ENCODE measurements at regions of chr16 and their contacts with region 1.

Region 1: DNA sequence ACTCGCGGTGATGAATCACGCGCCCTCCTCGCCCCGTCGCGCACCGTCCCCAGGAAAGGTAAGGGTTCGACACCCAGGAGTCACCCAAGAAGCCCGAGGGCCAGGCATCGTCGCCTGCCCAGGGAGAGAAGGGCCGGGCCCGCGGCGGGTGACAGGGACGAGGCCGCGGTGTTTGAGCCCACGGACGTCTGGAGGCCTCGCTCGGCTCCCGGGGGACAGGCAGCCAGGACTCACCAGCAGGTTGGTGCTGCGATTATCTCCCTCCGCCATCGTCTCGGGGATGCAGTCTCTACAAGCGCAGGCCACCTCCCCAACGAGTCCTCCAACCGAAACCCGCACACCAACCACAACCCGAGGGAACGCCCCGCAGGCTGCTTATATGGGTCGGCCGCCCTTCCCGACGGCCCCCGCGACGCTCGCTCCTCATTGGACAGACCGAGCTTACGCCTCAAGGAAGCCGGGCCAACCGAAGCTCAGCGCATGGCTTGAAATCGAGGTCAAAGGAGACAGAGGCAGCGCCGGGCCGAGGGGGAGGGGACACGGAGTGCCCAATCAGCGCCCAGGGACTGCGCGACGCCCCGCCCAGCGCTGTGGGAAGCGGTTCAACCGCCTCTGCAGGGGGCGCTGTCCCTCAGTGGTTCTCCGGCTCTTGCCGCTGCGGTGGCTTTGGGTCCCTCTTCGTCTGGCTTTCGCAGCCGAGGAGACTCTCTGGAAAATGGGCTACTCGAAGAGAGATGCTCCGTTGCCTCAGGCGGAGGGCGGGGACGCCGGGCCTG is at the start of gene ARL6IP1:
- DNase-seq: peak; percentile 97 to 100 (median 99)
- H3K4me3 ChIP-seq: peak within 1 kb of the TSS; percentile 82
- H3K4me3 Mint-ChIP-seq: peak within 1 kb of the TSS; percentile 88 to 98 (median 95)
- H3K27ac ChIP-seq: peak within 1 kb of the TSS; percentile 92
- H3K27ac Mint-ChIP-seq: peak within 1 kb of the TSS; percentile 87 to 99 (median 96)
- H3K4me1 ChIP-seq: peaks cover 45% of the 10 kb centered on the region
- H3K4me1 Mint-ChIP-seq: peaks cover 43 to 77% (median 62%) of the 10 kb centered on the region in 3 donors
- H3K27me3 ChIP-seq: no peaks in the 10 kb centered on the region
- H3K27me3 Mint-ChIP-seq: peaks cover 0 to 2% of the 10 kb centered on the region in 2 donors
- total RNA-seq, gene ARL6IP1: 90.6 to 92.8 TPM

Region 2: GRCh38 chr16:18789850-18790724 is 11.3 kb before region 1 on chr16 and contains the start of gene RPS15A:
- CTCF ChIA-PET with region 1: interaction called, 37 read pairs
- POLR2A ChIA-PET with region 1: interaction called, 118 read pairs
- DNase-seq: peak; percentile 86 to 96 (median 92)
- H3K4me3 ChIP-seq: peak within 1 kb of the TSS; percentile 76
- H3K4me3 Mint-ChIP-seq: peak within 1 kb of the TSS; percentile 90 to 99 (median 97)
- H3K27ac ChIP-seq: peak within 1 kb of the TSS; percentile 85
- H3K27ac Mint-ChIP-seq: peak within 1 kb of the TSS; percentile 87 to 98 (median 92)
- H3K4me1 ChIP-seq: peaks cover 41% of the 10 kb centered on the region
- H3K4me1 Mint-ChIP-seq: peaks cover 46 to 55% (median 52%) of the 10 kb centered on the region in 3 donors
- H3K27me3 ChIP-seq: no peaks in the 10 kb centered on the region
- H3K27me3 Mint-ChIP-seq: peaks cover 0 to 2% of the 10 kb centered on the region in 2 donors
- total RNA-seq, gene RPS15A: 1,654 to 1,749 TPM

Region 3: GRCh38 chr16:18816286-18816685 is 14.9 kb after region 1 on chr16:
- CTCF ChIA-PET with region 1: interaction called, 37 read pairs
- POLR2A ChIA-PET with region 1: interaction called, 5 read pairs
- DNase-seq: no peak
- H3K4me3 ChIP-seq: no peak overlapping the region
- H3K4me3 Mint-ChIP-seq: no peak overlapping the region
- H3K27ac ChIP-seq: no peak overlapping the region
- H3K27ac Mint-ChIP-seq: peak overlapping the region in 1 of 8 donors; percentile 30
- H3K4me1 ChIP-seq: peaks cover 4% of the 10 kb centered on the region
- H3K4me1 Mint-ChIP-seq: peaks cover 12 to 16% (median 12%) of the 10 kb centered on the region in 3 donors
- H3K27me3 ChIP-seq: no peaks in the 10 kb centered on the region
- H3K27me3 Mint-ChIP-seq: no peaks in the 10 kb centered on the region

Region 4: DNA sequence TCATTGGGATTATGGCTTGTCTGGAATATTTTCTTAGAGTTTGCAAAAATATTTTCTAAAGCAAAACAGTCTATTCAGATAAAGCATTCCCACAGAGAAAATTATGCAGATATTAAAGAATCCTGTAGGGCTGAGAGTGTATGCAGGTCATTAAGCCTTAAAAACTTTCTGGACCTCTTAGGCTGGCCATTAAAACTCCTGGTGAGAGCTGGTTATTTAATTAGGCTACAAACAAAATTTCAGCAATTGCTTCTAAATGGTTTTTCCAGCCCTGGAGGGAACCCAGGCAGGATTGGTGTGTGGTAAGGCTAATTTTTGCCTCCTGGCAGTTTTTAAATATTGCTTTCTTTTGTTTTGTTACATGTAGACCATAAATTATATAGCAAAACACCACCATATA is 152.2 kb after region 1 on chr16:
- CTCF ChIA-PET with region 1: no interaction called
- POLR2A ChIA-PET with region 1: no interaction called
- DNase-seq: no peak
- H3K4me3 ChIP-seq: no peak overlapping the region
- H3K4me3 Mint-ChIP-seq: no peak overlapping the region
- H3K27ac ChIP-seq: no peak overlapping the region
- H3K27ac Mint-ChIP-seq: no peak overlapping the region
- H3K4me1 ChIP-seq: peaks cover 10% of the 10 kb centered on the region
- H3K4me1 Mint-ChIP-seq: peaks cover 6 to 12% (median 6%) of the 10 kb centered on the region in 3 donors
- H3K27me3 ChIP-seq: peaks cover 3% of the 10 kb centered on the region
- H3K27me3 Mint-ChIP-seq: peaks cover 0 to 21% of the 10 kb centered on the region in 2 donors

Region 5: GRCh38 chr16:19463487-19463886 is 662.1 kb after region 1 on chr16:
- CTCF ChIA-PET with region 1: no interaction called
- POLR2A ChIA-PET with region 1: no interaction called
- DNase-seq: no peak
- H3K4me3 ChIP-seq: no peak overlapping the region
- H3K4me3 Mint-ChIP-seq: no peak overlapping the region
- H3K27ac ChIP-seq: no peak overlapping the region
- H3K27ac Mint-ChIP-seq: no peak overlapping the region
- H3K4me1 ChIP-seq: no peaks in the 10 kb centered on the region
- H3K4me1 Mint-ChIP-seq: no peaks in the 10 kb centered on the region
- H3K27me3 ChIP-seq: no peaks in the 10 kb centered on the region
- H3K27me3 Mint-ChIP-seq: peaks cover 7 to 13% of the 10 kb centered on the region in 2 donors